Activated CD4-positive, alpha-beta memory T cell treated with anti-CD3 and anti-CD28 coated beads for 36 hours (primary cell): ENCODE measurements at regions of chr16 and their contacts with region 1.

Region 1: DNA sequence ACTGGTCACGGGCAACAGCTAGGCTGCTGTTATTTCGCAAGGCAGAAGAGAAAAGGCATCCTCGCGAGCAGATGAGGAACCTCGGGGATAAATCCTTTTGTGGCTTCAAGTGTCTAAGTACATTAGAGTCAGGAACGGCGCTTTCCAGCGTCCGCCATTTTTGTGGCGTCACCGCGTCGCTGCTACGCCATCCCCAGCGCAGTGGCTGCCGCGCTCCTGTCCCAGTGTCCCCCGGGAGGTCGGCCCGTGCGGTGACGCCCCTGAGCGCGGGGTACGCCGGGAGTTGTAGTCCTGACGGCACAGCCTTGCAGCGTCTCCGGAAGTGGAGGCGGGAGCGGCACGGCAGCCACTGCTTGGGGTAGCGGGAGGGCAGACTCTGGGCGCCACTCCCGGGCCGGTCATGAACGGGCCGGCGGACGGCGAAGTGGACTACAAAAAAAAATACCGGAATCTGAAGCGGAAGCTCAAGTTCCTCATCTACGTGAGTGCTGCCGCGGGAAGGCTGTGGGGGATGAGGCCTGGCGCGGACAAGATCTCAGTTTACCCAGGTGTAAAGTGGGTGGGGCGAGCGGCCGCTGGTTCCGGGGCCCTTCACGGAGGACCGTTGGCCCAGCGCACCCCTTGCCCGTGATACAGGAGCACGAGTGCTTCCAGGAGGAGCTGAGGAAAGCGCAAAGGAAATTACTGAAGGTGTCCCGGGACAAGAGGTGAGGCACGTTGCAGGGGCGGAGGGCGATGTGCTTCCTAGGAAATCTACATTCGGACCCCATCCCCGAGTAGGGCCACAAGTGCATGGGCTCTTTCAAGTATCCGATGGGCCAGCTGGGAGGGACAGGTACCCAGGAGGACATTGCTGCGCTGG is at the start of gene INO80E:
- DNase-seq: peak; percentile 100
- H3K4me3 Mint-ChIP-seq: peak within 1 kb of the TSS; percentile 99
- H3K27ac Mint-ChIP-seq: peak within 1 kb of the TSS; percentile 99
- H3K4me1 Mint-ChIP-seq: peaks cover 33% of the 10 kb centered on the region
- H3K27me3 Mint-ChIP-seq: no peaks in the 10 kb centered on the region
- total RNA-seq, gene INO80E: 84.1 to 94.0 TPM

Region 2: GRCh38 chr16:29862884-29863668 is 133.1 kb before region 1 on chr16 and contains the start of gene CDIPT:
- CTCF ChIA-PET with region 1: no interaction called
- POLR2A ChIA-PET with region 1: no interaction called
- intact Hi-C with region 1: loop called (anchors 2 kb)
- DNase-seq: peak; percentile 95
- H3K4me3 Mint-ChIP-seq: peak within 1 kb of the TSS; percentile 94
- H3K27ac Mint-ChIP-seq: peak within 1 kb of the TSS; percentile 92
- H3K4me1 Mint-ChIP-seq: peaks cover 18% of the 10 kb centered on the region
- H3K27me3 Mint-ChIP-seq: no peaks in the 10 kb centered on the region
- total RNA-seq, gene CDIPT: 39.5 to 43.9 TPM

Region 3: GRCh38 chr16:29973384-29974246 is 22.5 kb before region 1 on chr16 and contains the start of gene TAOK2:
- CTCF ChIA-PET with region 1: no interaction called
- POLR2A ChIA-PET with region 1: interaction called, 16 read pairs
- intact Hi-C with region 1: loop called (anchors 1 kb)
- DNase-seq: peak; percentile 98
- H3K4me3 Mint-ChIP-seq: peak within 1 kb of the TSS; percentile 89
- H3K27ac Mint-ChIP-seq: peak within 1 kb of the TSS; percentile 86
- H3K4me1 Mint-ChIP-seq: peaks cover 34% of the 10 kb centered on the region
- H3K27me3 Mint-ChIP-seq: no peaks in the 10 kb centered on the region
- total RNA-seq, gene TAOK2: 27.2 to 28.2 TPM